Head of caudate nucleus (tissue), 42 donors: ENCODE measurements at regions of chr17 and their contacts with region 1.

Region 1: GRCh38 chr17:35612924-35613521 is 25.9 kb downstream of the AP2B1 start:
- DNase-seq: peak in 38 of 42 donors; percentile 27 to 79 (median 60)

Region 2: GRCh38 chr17:35747540-35748017 is 134.6 kb after region 1 on chr17:
- intact Hi-C with region 1: loop called (anchors 2 kb)
- DNase-seq: peak; percentile 63 to 93 (median 83)